ENCODE measurements at regions of chr3 and their contacts with region 1.

Region 1: GRCh38 chr3:122383771-122384697 is at the start of gene FAM162A:
- DNase-seq: peak; percentile 89 to 99 (median 95)

Region 2: DNA sequence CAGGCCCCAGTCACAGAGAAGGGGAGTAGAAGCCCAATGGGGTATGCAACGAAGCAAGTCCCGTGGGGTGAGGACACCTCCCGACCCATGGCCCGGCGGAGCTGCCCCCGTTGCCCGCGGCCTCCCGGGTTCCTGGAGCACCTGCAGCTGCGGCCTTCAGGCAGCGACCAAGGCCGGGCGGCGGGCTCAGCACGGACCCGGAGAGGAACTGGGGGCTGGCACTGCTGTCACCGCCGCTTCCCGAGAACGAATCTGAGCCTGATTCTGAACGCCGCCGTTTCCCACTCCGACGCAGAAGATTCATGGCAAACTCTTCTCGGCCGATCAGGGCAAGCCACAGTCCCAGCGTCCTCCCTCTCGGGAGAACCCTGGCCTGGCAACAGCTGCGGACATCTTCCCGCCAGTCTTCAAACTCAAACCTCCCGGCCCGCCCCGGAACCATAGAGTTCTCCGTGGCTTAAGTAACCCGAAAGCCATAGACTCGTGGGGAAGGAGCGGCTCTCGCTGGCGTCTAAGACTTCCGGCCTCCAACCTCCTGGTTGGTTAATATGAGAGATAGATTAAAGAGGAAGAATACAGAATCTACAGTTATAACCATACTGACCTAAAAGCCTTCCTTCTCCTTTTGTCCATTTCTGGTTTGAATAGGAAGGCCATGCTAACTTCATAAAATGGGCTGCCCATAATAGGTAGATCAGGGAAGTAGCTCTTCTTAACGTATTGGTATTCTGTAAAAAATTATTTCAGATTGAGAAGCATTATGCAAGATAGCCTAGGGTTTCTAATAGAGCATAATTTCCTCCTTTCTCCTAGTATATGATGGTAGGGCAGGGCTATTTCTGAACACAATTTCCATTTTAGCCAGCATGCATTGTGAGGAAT is 838.2 kb before region 1 on chr3 and contains the start of gene POLQ:
- intact Hi-C with region 1: loop called (anchors 2 kb)
- DNase-seq: peak; percentile 89 to 99 (median 94)

Region 3: DNA sequence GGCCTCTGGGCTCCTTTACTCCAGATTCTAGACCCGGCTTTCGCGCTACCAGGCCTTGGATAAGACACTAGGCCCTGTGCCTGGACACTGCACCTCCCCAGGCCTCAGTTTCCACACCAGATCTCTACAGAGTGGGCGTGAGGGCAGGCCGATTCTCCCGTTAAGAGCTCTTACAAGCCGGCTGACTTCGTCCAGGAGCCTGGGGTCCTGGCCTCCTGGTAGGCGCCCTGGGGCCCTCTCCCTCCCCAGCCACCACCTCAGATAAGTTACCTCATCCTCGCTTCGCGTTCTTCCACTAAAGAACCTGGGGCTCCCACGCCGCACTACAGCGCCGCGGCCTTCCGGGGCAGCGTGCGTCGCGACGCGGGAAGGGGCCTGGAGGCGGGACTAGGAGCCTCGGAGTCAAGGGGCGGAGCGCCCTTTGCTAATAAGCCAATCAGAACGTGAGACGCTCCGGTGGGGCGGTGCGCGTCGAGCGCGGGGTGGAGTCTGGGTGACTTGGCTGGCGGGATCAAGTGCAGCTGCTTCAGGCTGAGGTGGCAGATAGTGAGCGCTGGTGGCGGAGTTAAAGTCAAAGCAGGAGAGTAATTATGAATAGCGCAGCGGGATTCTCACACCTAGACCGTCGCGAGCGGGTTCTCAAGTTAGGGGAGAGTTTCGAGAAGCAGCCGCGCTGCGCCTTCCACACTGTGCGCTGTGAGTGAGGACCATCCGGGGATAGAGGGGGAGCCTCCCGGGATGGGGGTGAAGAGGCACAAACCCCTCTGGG is 549.2 kb before region 1 on chr3 and contains the starts of genes EAF2 and IQCB1:
- intact Hi-C with region 1: loop called (anchors 5 kb)
- DNase-seq: peak; percentile 91 to 100 (median 97)

Region 4: GRCh38 chr3:122146466-122146865 is 237.6 kb before region 1 on chr3:
- intact Hi-C with region 1: no loop called
- DNase-seq: no peak

Region 5: DNA sequence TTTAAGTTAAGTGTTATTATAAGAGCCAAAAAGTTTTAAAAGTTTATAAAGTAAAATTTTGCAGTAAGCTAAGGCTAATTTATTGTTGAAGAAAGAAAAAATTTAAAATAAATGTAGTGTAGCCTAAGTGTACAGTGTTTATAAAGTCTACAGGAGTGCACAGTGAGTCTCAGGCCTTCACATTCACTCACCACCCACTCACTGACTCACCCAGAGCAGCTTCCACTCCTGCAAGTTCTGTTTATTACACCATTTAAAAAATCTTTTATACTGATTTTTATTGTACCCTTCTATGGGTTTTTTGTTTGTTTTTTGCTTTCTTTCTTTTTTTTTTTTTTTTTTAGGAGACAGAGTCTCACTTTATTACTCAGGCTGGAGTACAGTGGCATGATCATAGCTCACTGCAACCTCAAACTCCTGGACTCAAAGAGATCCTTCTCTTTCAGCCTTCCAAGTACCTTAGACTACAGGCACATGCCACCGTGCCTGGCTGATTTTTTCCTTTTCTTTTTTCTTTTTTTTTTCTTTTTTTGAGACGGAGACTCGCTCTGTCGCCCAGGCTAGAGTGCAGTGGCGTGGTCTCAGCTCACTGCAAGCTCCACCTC is 33.1 kb before region 1 on chr3:
- intact Hi-C with region 1: no loop called
- DNase-seq: peak in 1 of 10 donors; percentile 11

Region 6: GRCh38 chr3:122395582-122395981 is 11.5 kb after region 1 on chr3:
- intact Hi-C with region 1: no loop called
- DNase-seq: no peak

Region 7: GRCh38 chr3:122415720-122416654 is 32.0 kb after region 1 on chr3 and contains the start of gene WDR5B:
- intact Hi-C with region 1: loop called (anchors 5 kb)
- DNase-seq: peak; percentile 95 to 99 (median 98)

Region 8: DNA sequence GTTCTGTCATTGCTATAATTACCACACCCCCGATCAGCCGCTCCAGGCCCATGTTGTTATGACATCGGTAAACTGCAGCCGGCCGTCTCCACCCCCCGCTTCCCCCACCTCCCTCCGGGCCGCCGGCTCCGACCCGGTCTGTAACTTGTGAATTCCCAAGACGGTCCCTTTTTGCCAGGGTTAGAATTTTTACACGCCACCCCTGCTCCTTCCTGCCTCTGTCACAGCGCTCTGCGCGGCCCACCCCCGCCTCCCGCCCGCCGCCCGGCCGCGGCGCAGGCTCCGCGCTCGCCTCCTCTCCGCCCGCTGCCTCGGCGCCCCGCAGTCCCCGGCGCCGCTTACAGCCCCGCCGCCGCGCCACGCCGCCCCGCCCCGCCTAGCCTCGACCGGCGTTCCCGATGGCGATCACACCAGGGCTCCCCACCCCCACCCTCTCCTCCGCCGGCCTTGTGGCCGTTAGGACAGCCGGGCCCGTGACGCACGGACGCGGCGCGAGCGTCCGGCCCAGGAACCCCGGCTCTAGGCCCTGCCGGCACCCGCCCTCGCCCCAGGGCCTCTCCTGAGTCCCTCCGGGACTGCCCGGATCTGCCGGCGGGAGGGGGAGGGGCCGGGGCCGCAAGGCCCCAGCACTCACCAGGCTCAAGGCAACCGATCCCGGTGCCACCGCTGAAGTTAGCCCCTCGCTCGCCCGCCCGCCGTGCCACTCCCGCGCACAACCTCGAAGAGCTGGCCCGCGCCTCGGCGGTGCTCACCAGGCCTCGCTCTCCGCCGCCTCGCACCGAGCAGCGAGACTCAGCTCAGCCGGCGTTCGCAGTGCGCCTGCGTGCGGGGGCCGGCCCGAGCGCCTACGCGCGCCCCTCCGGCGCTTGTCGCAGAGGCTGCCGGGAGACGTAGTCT is 130.3 kb after region 1 on chr3 and contains the start of gene KPNA1:
- intact Hi-C with region 1: loop called (anchors 10 kb)
- DNase-seq: peak; percentile 81 to 98 (median 86)